ENCODE measurements at regions of chr4 and their contacts with region 1.

Region 1: DNA sequence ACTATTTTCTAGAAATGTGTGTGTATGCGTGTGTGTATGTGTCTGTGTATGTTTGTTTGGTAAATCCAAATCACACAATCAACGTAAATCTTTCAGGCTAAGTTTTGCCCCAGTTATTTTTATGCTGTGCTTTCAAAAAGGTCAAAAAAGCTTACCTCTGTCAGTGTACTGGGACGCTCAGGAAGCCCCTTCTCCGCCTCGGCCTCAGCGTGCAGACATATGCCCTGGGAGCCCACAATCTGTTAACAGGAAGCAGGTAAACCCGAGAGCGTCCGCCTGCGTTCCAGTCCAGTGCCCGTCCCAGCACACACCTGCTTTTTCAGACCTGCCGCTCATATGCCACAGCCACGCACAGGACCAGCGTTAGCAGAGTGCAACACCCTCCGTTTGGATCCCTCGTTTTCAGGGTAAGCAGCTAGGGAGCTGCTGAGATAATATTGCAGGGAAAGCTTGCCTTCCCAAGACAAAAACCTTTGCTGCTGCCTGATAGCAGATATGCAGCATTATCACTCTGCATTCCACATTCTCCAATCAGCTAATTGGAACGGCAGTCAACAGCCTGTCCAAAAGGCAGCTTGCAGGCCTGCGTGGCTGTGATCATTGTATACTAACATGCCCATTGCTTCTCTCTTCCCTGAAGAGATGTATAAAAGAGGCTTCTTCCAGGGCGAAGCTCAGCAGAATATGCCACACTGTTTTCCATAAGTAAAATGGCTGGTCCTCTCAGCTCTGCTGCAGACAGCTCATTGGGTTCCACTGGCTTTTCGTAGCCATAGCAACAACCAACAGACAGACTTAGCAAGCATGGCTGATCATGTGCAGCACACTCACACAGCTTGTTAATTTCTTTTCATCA is at the start of gene SORBS2:
- DNase-seq: no peak
- ATAC-seq: peak; percentile 74
- total RNA-seq, gene SORBS2: 828 TPM

Region 2: GRCh38 chr4:185634066-185634652 is 177.6 kb before region 1 on chr4:
- intact Hi-C with region 1: no loop called
- DNase-seq: no peak
- ATAC-seq: no peak

Region 3: GRCh38 chr4:185837415-185838103 is 25.8 kb after region 1 on chr4:
- intact Hi-C with region 1: loop called (anchors 2 kb)
- DNase-seq: no peak
- ATAC-seq: no peak

Region 4: DNA sequence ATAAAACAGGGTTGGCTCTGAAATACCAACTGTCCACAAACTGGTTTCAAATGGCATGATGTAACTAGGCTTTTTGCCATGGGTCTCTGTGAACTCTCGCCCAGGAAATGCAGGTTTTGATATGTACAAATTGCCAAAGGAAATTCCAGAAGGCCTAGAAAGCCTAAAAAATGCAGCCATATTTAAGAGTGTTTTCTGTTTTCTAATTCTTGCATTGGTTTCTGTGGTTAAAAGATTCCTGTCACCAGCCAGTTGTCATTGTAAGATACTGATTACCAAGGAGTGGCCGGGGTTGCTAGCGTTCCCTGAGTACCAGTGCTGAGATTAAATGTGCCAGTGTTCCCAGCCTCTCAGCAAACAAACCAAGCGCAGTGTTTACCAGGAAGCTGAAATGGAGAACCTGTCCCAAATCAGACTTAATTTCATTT is 54.2 kb after region 1 on chr4:
- intact Hi-C with region 1: loop called (anchors 5 kb)
- DNase-seq: no peak
- ATAC-seq: peak; percentile 68

Measured in Right ventricle myocardium inferior (tissue), 1 donor.